HEK293 (cell line): ENCODE measurements at regions of chr3 and their contacts with region 1.

Region 1: GRCh38 chr3:15268033-15268631 is 62.1 kb downstream of the CAPN7 start:
- H3K4me3 ChIP-seq: no peak overlapping the region
- H3K27ac ChIP-seq: no peak overlapping the region
- H3K4me1 ChIP-seq: peaks cover 5% of the 10 kb centered on the region; the same call in 1 of the 2 replicates
- CTCF ChIP-seq: peak; percentile 73

Region 2: DNA sequence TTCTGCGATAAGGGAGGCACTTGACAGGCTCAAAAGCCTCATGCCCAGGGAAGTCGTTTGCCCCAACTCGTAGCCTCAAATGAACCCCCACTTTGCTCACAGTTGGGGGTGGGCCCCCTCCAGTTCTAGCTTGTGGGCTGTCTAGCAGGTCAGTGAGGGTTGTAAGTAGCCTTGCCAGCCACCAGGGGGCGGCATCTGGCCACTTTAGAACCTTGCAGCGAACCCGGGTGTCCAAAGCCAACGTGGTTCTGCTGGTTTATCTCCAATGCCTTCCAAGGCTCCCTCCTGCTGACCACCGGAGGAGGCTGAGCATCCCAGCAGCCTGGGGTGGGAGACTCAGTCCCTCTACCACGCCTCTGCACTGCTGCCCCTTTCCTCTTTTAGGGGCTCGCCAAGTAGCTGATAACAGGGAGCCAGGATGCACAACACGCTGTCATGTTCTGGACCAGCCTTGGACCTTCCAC is 160.0 kb before region 1 on chr3:
- CTCF ChIA-PET with region 1: interaction called, 20 read pairs
- POLR2A ChIA-PET with region 1: no interaction called
- H3K4me3 ChIP-seq: no peak overlapping the region
- H3K27ac ChIP-seq: no peak overlapping the region
- H3K4me1 ChIP-seq: no peaks in the 10 kb centered on the region
- CTCF ChIP-seq: peak; percentile 81

Region 3: GRCh38 chr3:15256861-15257341 is 11.2 kb before region 1 on chr3:
- CTCF ChIA-PET with region 1: interaction called, 26 read pairs
- POLR2A ChIA-PET with region 1: no interaction called
- H3K4me3 ChIP-seq: no peak overlapping the region
- H3K27ac ChIP-seq: no peak overlapping the region
- H3K4me1 ChIP-seq: no peaks in the 10 kb centered on the region
- CTCF ChIP-seq: no peak

Region 4: DNA sequence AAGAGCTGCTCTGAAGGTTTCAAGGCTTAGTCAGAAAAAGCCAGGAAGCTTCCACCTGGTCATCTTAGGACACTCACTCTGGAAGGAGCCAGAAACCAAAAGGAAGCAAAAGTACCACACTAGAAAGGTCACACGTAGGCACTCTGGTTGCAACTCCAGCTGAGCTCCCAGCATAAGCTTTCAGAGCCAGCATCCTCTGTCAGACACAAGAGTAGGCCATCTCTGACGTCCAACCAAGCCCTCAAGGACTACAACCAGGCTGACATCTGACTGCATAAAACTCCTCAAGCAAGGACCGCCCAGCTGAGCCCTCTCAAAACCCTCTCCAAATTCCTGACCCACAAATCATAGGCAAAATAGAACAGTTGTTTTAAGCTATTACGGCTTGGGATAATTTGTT is 51.4 kb after region 1 on chr3:
- CTCF ChIA-PET with region 1: interaction called, 14 read pairs
- POLR2A ChIA-PET with region 1: interaction called, 3 read pairs
- H3K4me3 ChIP-seq: no peak overlapping the region
- H3K27ac ChIP-seq: no peak overlapping the region
- H3K4me1 ChIP-seq: peaks cover 16% of the 10 kb centered on the region
- CTCF ChIP-seq: no peak

Region 5: GRCh38 chr3:15367059-15367458 is 98.9 kb after region 1 on chr3:
- CTCF ChIA-PET with region 1: interaction called, 14 read pairs
- POLR2A ChIA-PET with region 1: no interaction called
- H3K4me3 ChIP-seq: no peak overlapping the region
- H3K27ac ChIP-seq: no peak overlapping the region
- H3K4me1 ChIP-seq: no peaks in the 10 kb centered on the region; the same call in 1 of the 2 replicates
- CTCF ChIP-seq: no peak

Region 6: GRCh38 chr3:15399970-15400369 is 131.8 kb after region 1 on chr3:
- CTCF ChIA-PET with region 1: interaction called, 109 read pairs
- POLR2A ChIA-PET with region 1: interaction called, 3 read pairs
- H3K4me3 ChIP-seq: no peak overlapping the region
- H3K27ac ChIP-seq: no peak overlapping the region
- H3K4me1 ChIP-seq: no peaks in the 10 kb centered on the region
- CTCF ChIP-seq: no peak